PC-9 (cell line): ENCODE measurements at regions of chr7 and their contacts with region 1.

Region 1: DNA sequence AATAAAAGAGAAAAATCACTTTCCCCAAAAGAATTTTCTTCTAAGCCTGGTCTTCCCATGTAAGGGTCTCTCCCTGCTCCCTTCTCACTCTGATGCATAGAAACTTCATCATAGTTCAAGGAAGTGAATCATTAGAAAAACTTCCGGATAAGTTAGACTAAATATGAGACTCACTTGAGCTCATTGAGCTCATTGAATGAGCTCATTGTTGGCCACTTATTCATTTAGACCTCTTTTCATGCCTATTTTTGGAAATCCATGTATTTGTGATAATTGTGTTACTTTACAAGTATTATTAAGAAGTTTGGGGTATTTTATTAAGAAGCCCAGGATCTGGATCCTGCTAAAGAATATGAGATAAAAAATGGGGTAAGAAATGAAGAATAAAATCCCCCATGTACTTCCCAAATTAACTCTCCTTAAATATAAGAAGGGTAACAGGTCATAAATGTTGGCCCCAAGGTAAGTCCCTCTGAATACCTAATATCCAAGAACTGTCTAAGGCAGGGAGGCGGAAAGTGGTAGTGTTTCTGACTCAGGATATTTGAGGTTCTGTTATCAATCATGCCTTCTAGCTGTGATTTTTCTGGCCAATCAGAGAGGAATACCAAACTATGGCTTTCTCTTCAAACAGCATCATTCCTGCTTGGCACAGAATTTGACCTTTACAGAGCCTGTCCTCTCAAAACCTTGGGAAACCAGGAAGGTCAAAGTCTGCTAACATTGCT is 236.5 kb upstream of the PTN start:
- DNase-seq: peak in 1 of 2 experiments; percentile 48
- H3K4me3 ChIP-seq: no peak overlapping the region
- H3K27ac ChIP-seq: 0 out of 2 replicates have a peak overlapping the region, but pooled peaks have one; percentile 27
- H3K4me1 ChIP-seq: 0 out of 2 replicates have a peak, but pooled peaks cover 8% of the 10 kb centered on the region
- H3K27me3 ChIP-seq: no peaks in the 10 kb centered on the region
- CTCF ChIP-seq: no peak

Region 2: DNA sequence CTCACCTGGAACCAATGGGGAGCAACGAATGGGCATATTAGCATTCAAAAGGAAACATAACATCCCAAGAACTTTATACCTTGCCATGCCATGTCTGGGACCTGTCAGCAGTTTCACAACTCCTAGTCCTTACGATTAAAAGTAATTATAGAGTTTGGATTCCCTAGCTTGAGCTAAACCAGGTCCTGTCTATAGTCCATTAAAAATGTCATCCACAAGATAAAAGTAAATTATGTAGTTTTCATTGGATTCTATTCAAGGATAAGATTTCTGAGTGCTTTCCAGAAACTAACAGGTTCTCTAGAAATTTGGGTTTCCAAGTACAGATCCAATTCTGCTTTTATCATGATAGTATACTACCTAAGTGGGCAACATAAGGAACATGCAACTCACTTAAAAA is 73.0 kb before region 1 on chr7:
- CTCF ChIA-PET with region 1: no interaction called
- POLR2A ChIA-PET with region 1: no interaction called
- intact Hi-C with region 1: loop called (anchors 5 kb)
- DNase-seq: no peak
- H3K4me3 ChIP-seq: no peak overlapping the region
- H3K27ac ChIP-seq: no peak overlapping the region
- H3K4me1 ChIP-seq: 0 out of 2 replicates have a peak, but pooled peaks cover 4% of the 10 kb centered on the region
- H3K27me3 ChIP-seq: no peaks in the 10 kb centered on the region
- CTCF ChIP-seq: no peak

Region 3: GRCh38 chr7:137545059-137545716 is 34.9 kb before region 1 on chr7:
- CTCF ChIA-PET with region 1: no interaction called
- POLR2A ChIA-PET with region 1: no interaction called
- intact Hi-C with region 1: loop called (anchors 1 kb)
- DNase-seq: no peak
- H3K4me3 ChIP-seq: no peak overlapping the region
- H3K27ac ChIP-seq: no peak overlapping the region
- H3K4me1 ChIP-seq: no peaks in the 10 kb centered on the region
- H3K27me3 ChIP-seq: no peaks in the 10 kb centered on the region
- CTCF ChIP-seq: no peak